ENCODE measurements at regions of chr22 and their contacts with region 1.

Region 1: GRCh38 chr22:20296598-20296997 is 23.3 kb downstream of the DGCR6L start:
- DNase-seq: no peak
- H3K4me3 ChIP-seq: no peak overlapping the region
- H3K27ac ChIP-seq: no peak overlapping the region
- H3K4me1 ChIP-seq: peaks cover 0 to 5% (median 0%) of the 10 kb centered on the region in 4 experiments; a peak in 3 of 7 replicates
- H3K27me3 ChIP-seq: peaks cover 14 to 42% (median 32%) of the 10 kb centered on the region in 4 experiments
- CTCF ChIP-seq: no peak
- EP300 ChIP-seq: no peak
- POLR2A ChIP-seq: no peak
- RAD21 ChIP-seq: no peak

Region 2: DNA sequence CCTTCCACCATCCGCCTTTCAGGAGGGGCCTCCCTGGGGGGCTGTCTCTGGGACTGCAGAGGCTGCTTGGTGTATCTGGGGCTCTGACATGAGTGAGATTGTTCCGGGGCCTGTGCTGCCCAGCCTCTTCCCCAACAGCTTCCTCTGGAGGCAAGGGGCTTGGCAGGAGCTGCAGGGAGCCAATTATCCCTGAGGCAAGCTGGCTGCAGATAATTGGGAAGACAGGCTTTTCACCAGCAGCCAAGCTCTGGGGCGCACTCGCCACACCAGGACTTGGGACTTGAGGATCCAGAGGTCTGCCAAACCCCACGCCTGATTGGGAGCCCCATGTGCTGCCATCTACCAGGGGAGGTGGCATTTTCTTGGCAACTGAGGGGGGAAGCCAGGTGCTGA is 12.9 kb before region 1 on chr22:
- CTCF ChIA-PET with region 1: interaction called, 27 read pairs
- POLR2A ChIA-PET with region 1: interaction called, 3 read pairs
- DNase-seq: no peak
- H3K4me3 ChIP-seq: no peak overlapping the region
- H3K27ac ChIP-seq: no peak overlapping the region
- H3K4me1 ChIP-seq: no peaks in the 10 kb centered on the region
- H3K27me3 ChIP-seq: no peaks in the 10 kb centered on the region
- CTCF ChIP-seq: no peak
- EP300 ChIP-seq: no peak
- POLR2A ChIP-seq: no peak
- RAD21 ChIP-seq: no peak

Region 3: DNA sequence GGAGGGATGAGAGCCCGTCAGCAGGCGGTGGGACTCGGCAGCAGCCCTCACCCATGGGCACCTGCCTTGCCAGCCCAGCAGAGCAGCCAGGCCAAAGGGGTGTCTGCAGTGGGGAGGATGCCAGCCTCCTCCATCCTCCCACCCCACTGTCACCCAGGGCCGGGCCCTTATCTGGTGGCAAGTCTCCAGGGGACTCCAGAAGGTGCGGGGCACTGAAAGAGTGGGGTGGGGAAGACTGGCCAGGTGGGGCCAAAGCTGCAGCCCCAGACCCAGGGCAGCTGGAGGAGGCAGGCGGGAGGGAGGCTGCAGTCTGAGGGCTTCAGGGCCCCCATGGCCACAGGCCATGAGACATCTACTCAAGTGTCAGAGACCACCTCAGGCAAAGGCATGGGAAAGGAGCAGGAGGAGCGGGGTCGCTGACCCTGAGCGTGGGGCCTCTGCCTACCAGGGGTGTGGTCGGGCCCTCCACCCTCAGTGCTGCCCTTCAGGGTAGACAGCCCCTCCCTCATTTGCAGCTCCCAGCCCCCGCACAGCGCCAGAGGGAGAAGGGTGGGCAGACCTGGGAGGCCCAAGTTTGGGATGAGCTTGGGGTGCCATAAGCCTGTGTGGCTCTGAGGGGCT is 19.7 kb after region 1 on chr22:
- CTCF ChIA-PET with region 1: interaction called, 11 read pairs
- POLR2A ChIA-PET with region 1: interaction called, 3 read pairs
- DNase-seq: no peak
- H3K4me3 ChIP-seq: no peak overlapping the region
- H3K27ac ChIP-seq: no peak overlapping the region
- H3K4me1 ChIP-seq: peaks cover 0 to 4% (median 2%) of the 10 kb centered on the region in 4 experiments; a peak in 4 of 7 replicates
- H3K27me3 ChIP-seq: no peaks in the 10 kb centered on the region; a peak in 1 of 7 replicates
- CTCF ChIP-seq: no peak
- EP300 ChIP-seq: no peak
- POLR2A ChIP-seq: no peak
- RAD21 ChIP-seq: no peak

Region 4: GRCh38 chr22:20354238-20354975 is 57.8 kb after region 1 on chr22:
- CTCF ChIA-PET with region 1: no interaction called
- POLR2A ChIA-PET with region 1: no interaction called
- DNase-seq: peak in 1 of 2 experiments; percentile 20
- H3K4me3 ChIP-seq: no peak overlapping the region
- H3K27ac ChIP-seq: no peak overlapping the region
- H3K4me1 ChIP-seq: no peaks in the 10 kb centered on the region
- H3K27me3 ChIP-seq: no peaks in the 10 kb centered on the region
- CTCF ChIP-seq: no peak
- EP300 ChIP-seq: no peak
- POLR2A ChIP-seq: no peak
- RAD21 ChIP-seq: no peak

Measured in H1 (cell line).